ENCODE measurements at regions of chr16 and their contacts with region 1.

Region 1: GRCh38 chr16:88569985-88570690 is at the start of gene ZC3H18:
- DNase-seq: peak; percentile 77 to 97
- H3K4me3 ChIP-seq: peak within 1 kb of the TSS; percentile 79 to 98
- H3K27ac ChIP-seq: peak within 1 kb of the TSS; percentile 79 to 83
- H3K4me1 ChIP-seq: peaks cover 10 to 17% of the 10 kb centered on the region in 2 donors
- H3K27me3 ChIP-seq: no peaks in the 10 kb centered on the region
- CTCF ChIP-seq: no peak
- total RNA-seq, gene ZC3H18: 36.3 TPM

Region 2: DNA sequence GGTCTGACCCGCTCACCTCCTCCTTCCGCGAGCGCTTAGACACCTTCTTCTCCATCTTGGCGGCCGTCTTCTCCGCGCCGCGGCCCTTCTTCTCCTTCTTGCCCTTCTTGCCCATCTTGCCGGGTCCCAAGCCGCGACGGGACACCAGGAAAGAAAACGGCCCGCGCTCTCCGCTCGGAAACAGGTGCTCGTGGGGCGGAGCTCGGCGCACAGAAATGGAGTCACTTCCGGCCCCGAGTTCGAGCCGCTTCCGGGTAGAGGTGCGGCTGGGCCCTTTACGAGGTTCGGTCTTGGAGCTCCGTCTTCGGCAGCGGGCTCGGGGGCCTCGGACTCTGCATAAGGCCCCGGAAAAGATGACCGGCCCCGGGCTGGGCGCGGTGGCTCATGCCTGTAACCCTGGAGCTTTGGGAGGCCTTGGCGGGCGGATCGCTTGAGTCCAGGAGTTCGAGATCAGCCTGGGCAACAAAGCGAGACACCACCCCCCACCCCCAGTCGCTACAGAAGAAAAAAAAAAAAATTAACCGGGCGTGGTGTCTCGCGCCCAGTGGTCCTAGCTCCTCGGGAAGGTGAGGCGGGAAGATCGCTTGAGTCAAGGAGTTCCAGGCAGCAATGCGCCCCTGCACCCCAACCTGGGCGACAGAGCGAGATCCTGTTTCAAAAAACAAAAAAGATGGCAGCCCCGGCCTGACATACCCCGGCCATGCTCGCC is 804.2 kb before region 1 on chr16 and contains the start of gene KLHDC4:
- intact Hi-C with region 1: loop called (anchors 5 kb)
- DNase-seq: peak; percentile 57 to 94
- H3K4me3 ChIP-seq: peak within 1 kb of the TSS; percentile 72 to 81
- H3K27ac ChIP-seq: peak within 1 kb of the TSS; percentile 81 to 86
- H3K4me1 ChIP-seq: peaks cover 8 to 9% of the 10 kb centered on the region in 2 donors
- H3K27me3 ChIP-seq: no peaks in the 10 kb centered on the region
- CTCF ChIP-seq: no peak
- total RNA-seq, gene KLHDC4: 38.4 TPM

Region 3: GRCh38 chr16:88452482-88453216 is 117.5 kb before region 1 on chr16:
- intact Hi-C with region 1: loop called (anchors 2 kb)
- DNase-seq: peak; percentile 84 to 98
- H3K4me3 ChIP-seq: peak overlapping the region; percentile 75 to 84
- H3K27ac ChIP-seq: peak overlapping the region; percentile 56 to 58
- H3K4me1 ChIP-seq: peaks cover 7 to 24% of the 10 kb centered on the region in 2 donors
- H3K27me3 ChIP-seq: no peaks in the 10 kb centered on the region
- CTCF ChIP-seq: no peak

Region 4: DNA sequence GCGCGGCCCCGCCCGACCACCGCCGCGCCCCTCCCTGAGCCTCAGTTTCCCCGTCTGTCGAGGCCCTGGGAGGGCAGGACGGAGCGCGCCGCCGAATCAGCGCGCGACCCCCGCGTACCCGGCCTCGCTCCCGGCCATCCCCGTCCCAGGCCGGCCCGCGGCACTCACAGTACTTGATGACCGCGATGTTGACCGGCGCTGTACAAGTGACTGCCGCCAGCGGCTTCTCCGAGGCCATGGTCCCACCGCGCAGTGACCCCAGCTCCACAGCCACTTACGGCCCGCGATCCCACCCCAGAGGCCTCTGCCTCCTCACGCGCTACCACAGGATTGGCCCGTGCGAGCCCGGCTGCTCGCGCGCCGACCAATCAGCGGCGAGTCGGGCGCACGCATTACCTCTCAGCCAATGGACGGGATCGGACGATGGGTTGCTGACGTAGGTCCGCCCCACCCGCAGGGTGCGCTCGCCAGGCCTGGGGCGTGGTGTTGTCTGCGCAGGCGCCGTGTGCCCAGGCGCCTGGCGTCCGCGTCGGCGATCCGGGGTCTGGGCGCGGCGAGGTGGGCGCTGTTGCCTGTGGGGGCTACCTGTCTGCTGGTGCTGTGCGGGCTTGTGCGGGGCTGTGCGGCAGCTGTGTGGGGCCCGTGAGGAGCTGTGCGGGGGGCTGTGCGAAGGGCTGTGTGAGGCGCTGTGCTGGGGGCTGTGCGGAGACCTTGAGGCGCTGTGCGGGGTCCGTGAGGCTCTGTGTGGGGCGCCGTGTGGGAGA is 92.9 kb after region 1 on chr16 and contains the start of gene MVD:
- intact Hi-C with region 1: loop called (anchors 2 kb)
- DNase-seq: peak; percentile 93 to 98
- H3K4me3 ChIP-seq: peak within 1 kb of the TSS; percentile 87 to 89
- H3K27ac ChIP-seq: peak within 1 kb of the TSS; percentile 68 to 72
- H3K4me1 ChIP-seq: peaks cover 0 to 11% of the 10 kb centered on the region in 2 donors
- H3K27me3 ChIP-seq: no peaks in the 10 kb centered on the region
- CTCF ChIP-seq: no peak
- total RNA-seq, gene MVD: 72.9 TPM

Region 5: GRCh38 chr16:88811769-88812512 is 241.8 kb after region 1 on chr16 and contains the start of gene APRT:
- intact Hi-C with region 1: loop called (anchors 2 kb)
- DNase-seq: peak; percentile 65 to 96
- H3K4me3 ChIP-seq: peak within 1 kb of the TSS; percentile 80 to 83
- H3K27ac ChIP-seq: peak within 1 kb of the TSS; percentile 86 to 93
- H3K4me1 ChIP-seq: peaks cover 8 to 21% of the 10 kb centered on the region in 2 donors
- H3K27me3 ChIP-seq: no peaks in the 10 kb centered on the region
- CTCF ChIP-seq: peak in 2 of 3 experiments; percentile 41 to 44
- total RNA-seq, gene APRT: 305 TPM

Region 6: GRCh38 chr16:88901718-88902337 is 331.7 kb after region 1 on chr16:
- intact Hi-C with region 1: no loop called
- DNase-seq: no peak
- H3K4me3 ChIP-seq: no peak overlapping the region
- H3K27ac ChIP-seq: no peak overlapping the region
- H3K4me1 ChIP-seq: no peaks in the 10 kb centered on the region
- H3K27me3 ChIP-seq: no peaks in the 10 kb centered on the region
- CTCF ChIP-seq: no peak